ENCODE measurements at regions of chr16 and their contacts with region 1.

Region 1: GRCh38 chr16:19907161-19907992 is 22.7 kb upstream of the GPRC5B start:
- DNase-seq: peak; percentile 74
- H3K4me3 ChIP-seq: no peak overlapping the region
- H3K27ac ChIP-seq: no peak overlapping the region
- H3K4me1 ChIP-seq: no peaks in the 10 kb centered on the region
- CTCF ChIP-seq: peak; percentile 94

Region 2: DNA sequence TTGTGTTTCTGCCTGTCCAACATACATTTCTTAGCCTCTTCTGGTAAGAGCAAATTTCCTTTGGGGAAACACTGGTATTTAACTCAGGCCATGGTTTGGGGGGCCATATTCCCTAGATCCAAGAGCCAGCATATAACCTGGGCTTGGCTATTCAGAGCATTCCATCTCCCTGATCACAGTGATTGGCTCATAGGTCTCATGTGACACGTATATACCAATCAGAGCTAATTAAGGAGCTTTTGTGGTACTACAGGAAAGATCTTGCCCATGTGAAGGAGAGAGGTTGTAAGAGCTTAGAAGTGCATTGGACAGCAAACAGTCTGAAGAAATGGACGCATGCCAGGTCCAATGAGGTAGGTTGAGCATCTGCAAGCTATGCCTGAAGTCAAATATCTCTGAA is 199.7 kb after region 1 on chr16:
- CTCF ChIA-PET with region 1: no interaction called
- POLR2A ChIA-PET with region 1: no interaction called
- intact Hi-C with region 1: no loop called
- DNase-seq: no peak
- H3K4me3 ChIP-seq: no peak overlapping the region
- H3K27ac ChIP-seq: no peak overlapping the region
- H3K4me1 ChIP-seq: no peaks in the 10 kb centered on the region
- CTCF ChIP-seq: no peak

Region 3: DNA sequence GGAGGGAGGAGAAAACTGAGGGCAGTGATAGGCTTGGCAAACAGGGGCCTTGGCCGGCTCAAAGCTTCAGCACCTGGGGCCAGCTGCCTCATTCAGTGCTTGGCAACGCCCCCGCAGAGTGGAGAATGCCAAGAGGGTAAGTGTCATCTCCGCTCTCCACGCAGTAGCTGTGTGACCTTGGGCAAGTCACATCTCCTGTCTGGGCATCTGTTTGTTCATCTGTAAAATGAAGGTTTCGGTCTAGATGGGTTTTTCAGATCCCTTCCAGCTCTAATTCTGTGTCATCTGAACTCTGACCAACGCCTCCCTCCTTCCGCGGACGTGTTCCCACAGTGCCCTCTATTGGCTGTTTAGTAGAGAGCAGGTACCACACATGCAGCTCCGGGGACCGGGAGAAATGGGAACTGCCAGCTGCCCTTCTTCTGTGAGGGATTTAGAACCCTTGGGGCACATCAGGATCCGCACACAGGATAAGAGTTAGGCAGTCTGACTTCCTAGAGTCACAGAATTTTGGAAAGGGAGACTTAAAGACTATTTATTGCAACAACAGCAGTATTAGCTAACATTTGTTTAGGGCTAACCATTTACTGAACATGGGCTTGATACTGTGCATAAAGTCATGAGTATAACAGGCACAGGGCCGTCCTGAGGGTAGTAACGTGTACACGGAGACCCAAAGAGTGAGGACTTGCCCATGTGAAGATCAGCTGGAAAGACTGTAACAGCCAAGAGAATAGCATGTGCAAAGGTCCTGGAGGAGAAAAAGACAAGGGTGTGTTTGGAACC is 393.1 kb after region 1 on chr16:
- CTCF ChIA-PET with region 1: interaction called, 6 read pairs
- POLR2A ChIA-PET with region 1: interaction called, 3 read pairs
- intact Hi-C with region 1: loop called (anchors 2 kb)
- DNase-seq: peak; percentile 52
- H3K4me3 ChIP-seq: no peak overlapping the region
- H3K27ac ChIP-seq: no peak overlapping the region
- H3K4me1 ChIP-seq: no peaks in the 10 kb centered on the region
- CTCF ChIP-seq: peak; percentile 87

Region 4: DNA sequence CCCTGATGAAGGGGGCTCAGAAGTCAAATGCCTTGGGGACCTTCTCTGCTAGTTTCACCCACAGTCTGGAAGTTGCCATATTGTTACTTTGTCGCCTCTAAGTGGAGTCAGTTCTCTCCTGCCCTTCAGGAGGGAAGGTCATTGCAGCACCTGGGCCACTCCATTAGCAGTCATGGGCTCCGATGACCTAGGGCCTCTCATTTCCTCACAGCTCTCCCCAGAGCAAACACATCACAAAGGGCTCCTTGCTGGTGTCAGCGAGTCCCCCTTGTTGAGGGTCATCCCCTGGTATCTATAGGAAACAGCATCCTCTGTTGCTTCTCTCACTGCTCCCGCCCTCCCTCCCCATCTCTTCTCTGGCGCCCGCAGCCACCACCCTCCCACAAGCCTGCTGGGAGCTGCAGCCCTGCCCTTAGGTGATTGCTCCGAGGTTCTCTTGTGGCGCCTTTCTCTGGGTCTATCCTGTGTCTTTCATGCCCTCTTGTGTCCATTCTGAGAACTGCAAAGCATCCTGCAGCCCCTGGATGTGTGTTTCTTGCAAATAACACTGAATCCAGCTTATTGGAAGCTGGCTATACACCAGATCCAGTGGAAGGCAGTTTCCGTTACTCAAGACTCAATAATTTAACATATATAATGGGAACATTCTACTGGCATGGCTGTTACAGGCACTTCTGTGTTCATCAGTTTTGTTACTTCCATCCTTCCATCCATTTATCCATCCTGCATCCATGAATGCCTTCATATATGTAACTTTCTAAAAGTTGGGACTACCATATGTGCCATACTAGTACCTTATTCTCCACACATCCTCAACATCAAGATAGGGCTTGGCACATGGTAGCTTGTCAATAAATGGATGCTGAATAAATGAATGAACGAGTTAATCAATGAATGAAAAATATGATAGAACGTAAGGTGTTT is 476.0 kb after region 1 on chr16:
- CTCF ChIA-PET with region 1: interaction called, 6 read pairs
- POLR2A ChIA-PET with region 1: no interaction called
- intact Hi-C with region 1: loop called (anchors 1 kb)
- DNase-seq: peak; percentile 63
- H3K4me3 ChIP-seq: no peak overlapping the region
- H3K27ac ChIP-seq: no peak overlapping the region
- H3K4me1 ChIP-seq: no peaks in the 10 kb centered on the region
- CTCF ChIP-seq: peak; percentile 81